GM10248 (cell line): ENCODE measurements at regions of chr11 and their contacts with region 1.

Region 1: GRCh38 chr11:63871962-63872799 is 33.3 kb downstream of the MARK2 start:
- DNase-seq: peak; percentile 88
- CTCF ChIP-seq: peak; percentile 79

Region 2: GRCh38 chr11:63888170-63889086 is 16.2 kb after region 1 on chr11:
- CTCF ChIA-PET with region 1: interaction called, 10 read pairs
- POLR2A ChIA-PET with region 1: no interaction called
- DNase-seq: peak; percentile 78
- CTCF ChIP-seq: no peak